ENCODE measurements at regions of chr22 and their contacts with region 1.

Region 1: DNA sequence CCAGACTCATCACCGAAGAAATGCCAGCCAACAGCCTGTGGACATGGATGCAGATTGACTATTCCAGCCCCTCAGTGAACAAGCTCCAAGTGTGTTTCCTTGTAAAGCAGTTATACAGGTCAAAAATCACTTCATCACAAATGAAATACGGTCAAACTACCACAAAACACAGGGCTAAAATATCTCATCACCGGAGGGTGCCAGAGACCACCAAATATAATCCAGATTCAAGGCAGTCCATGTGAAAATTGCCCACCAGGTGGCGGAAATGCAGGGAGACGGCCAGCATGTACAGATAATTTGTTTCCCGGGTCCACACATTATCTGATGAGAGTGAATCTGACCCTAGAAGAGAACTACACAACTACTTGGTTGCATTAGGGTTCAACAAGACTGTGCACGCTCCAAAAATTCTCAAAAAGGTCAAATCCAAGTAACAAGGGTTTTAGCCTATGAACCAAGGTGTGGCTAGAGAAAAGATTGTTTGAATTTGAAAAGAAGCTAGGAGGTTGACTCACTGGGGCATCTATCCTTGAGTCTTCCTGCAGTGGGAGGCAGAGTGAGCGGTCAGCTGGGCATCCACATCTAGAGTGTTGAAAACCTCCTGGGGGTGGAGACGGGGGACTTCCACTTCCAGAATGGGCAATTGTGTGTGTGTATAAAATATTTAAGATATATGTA is 71.7 kb downstream of the IGLL5 start:
- DNase-seq: peak; percentile 80 to 83
- H3K4me3 ChIP-seq: no peak overlapping the region
- H3K27ac ChIP-seq: no peak overlapping the region
- H3K4me1 ChIP-seq: no peaks in the 10 kb centered on the region
- H3K27me3 ChIP-seq: no peaks in the 10 kb centered on the region
- CTCF ChIP-seq: peak; percentile 65 to 99 (median 90)
- POLR2A ChIP-seq: no peak

Region 2: GRCh38 chr22:22848364-22848866 is 110.9 kb before region 1 on chr22:
- intact Hi-C with region 1: loop called (anchors 5 kb)
- DNase-seq: peak; percentile 69 to 74
- H3K4me3 ChIP-seq: no peak overlapping the region
- H3K27ac ChIP-seq: no peak overlapping the region
- H3K4me1 ChIP-seq: no peaks in the 10 kb centered on the region
- H3K27me3 ChIP-seq: no peaks in the 10 kb centered on the region
- CTCF ChIP-seq: peak; percentile 47 to 89 (median 71)
- POLR2A ChIP-seq: no peak

Region 3: DNA sequence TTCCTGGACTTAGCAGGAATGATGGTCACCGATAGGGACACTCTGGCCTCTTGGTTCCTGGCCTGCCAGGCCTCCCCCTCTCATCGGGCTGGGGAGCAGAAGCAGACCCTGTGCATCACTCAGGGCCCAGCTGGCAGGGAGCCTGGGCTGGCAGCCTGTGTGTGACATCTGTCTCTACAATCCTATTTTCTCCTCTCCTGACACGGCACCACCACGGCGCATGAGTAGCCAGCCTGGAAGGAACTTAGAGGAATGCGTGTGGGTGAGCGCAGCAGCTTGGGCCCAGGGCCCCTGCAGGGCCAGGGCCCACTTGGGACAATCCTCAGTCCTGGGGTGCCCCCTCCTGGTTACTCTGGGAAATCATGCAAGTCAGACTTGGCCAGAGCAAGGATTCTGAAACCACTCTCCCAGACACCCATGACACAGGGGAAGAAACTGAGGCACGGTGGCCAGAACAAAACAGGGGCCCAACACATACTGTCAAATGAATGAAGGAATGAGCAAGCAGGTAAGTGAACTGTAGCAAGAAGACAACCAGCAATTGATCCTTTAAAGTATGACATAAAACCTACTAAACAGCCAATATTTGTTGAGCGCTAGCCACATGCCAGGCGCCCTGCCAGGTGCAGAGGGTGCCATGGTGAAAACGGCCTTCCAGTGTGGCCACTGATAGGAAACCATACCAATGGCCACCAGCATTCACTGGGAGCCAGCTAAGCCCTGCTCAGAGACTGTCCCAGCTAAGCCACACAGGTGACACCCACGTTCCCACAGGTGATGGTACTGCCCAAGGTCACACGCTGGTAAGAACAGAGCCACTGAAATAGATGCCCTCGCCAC is 169.2 kb after region 1 on chr22:
- intact Hi-C with region 1: loop called (anchors 2 kb)
- DNase-seq: peak; percentile 80 to 86
- H3K4me3 ChIP-seq: no peak overlapping the region
- H3K27ac ChIP-seq: no peak overlapping the region
- H3K4me1 ChIP-seq: peaks cover 0 to 4% of the 10 kb centered on the region in 2 donors
- H3K27me3 ChIP-seq: no peaks in the 10 kb centered on the region
- CTCF ChIP-seq: peak; percentile 63 to 89 (median 79)
- POLR2A ChIP-seq: no peak